MCF 10A (cell line): ENCODE measurements at regions of chr12 and their contacts with region 1.

Region 1: DNA sequence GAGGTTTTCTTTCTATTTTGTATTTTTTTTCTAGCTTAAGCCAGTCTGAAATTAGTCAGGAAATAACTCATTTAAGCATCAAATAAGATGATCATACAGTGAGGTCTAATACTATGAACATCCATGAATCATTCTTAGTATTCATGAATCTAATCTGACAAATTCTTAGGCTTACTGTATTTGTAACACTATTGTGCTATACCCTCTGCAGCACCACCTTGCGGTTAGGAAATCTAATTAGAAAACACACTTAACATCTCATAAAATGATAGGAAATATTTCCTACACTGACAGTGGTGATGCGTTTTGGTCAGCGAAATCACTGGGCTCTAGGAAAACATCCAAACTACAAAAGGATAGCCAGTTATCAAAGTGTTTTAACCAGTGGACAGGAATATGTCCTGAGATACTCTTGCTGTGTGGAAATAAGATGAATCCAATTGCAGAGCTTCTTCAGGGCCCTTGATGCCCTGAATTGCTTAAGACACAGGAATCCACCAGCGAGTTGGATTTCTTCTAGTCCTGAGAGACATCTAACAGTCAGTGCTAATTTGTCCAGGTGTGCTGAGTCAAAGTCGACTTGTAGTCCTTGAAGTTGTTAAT is 109.3 kb upstream of the MYF6 start:
- DNase-seq: peak; percentile 61
- H3K4me3 Mint-ChIP-seq: no peak overlapping the region
- H3K27ac Mint-ChIP-seq: no peak overlapping the region
- H3K4me1 Mint-ChIP-seq: no peaks in the 10 kb centered on the region
- H3K27me3 Mint-ChIP-seq: peaks cover 30% of the 10 kb centered on the region
- CTCF ChIP-seq: peak; percentile 52

Region 2: DNA sequence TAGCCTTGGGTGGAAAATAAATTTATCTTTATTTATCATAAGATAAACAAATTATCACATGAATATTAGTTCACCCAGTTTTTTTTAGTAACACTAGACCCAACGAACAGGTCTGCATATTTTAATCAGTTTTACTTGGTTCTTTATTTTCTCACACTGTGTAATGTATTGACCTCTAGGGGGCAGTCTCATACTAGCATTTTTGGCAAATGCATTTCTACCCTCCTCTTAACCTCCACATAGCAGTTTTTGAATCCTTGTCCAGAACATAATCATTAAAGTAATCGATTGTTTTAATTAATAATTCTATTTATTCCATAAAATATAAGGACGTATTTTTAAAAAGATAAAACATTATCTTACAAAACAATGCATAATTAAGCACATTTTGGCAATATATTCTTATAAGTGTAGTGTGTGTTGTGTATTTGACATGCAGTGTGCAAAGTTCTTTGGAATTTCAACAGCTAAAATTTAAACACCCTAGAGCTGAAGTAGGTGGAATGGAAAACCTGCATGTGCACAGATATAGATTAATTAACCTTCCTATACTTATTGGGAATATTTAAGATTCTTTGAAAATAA is 185.6 kb before region 1 on chr12:
- CTCF ChIA-PET with region 1: interaction called, 3 read pairs
- POLR2A ChIA-PET with region 1: no interaction called
- intact Hi-C with region 1: loop called (anchors 2 kb)
- DNase-seq: peak; percentile 66
- H3K4me3 Mint-ChIP-seq: no peak overlapping the region
- H3K27ac Mint-ChIP-seq: no peak overlapping the region
- H3K4me1 Mint-ChIP-seq: no peaks in the 10 kb centered on the region
- H3K27me3 Mint-ChIP-seq: peaks cover 67% of the 10 kb centered on the region
- CTCF ChIP-seq: peak; percentile 66

Region 3: DNA sequence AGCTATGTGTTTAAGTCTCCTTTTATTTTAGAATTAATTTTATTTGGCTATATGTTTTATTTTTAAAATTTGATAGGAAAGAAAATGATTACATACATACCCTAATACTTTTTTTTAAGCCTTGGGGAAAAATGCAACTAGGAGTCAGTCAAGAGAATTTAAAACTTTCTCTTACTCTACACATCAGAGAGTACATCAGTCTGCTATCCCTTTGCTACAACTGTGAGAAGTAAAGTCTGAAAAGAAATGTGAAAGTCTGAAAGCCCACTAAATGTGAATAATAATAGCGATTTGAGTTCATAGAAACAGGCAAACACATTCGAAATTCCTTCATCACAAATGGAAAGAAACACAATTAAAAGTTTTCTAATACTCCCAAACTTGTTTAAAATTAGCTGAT is 59.1 kb before region 1 on chr12:
- CTCF ChIA-PET with region 1: no interaction called
- POLR2A ChIA-PET with region 1: interaction called, 3 read pairs
- intact Hi-C with region 1: loop called (anchors 5 kb)
- DNase-seq: no peak
- H3K4me3 Mint-ChIP-seq: no peak overlapping the region
- H3K27ac Mint-ChIP-seq: no peak overlapping the region
- H3K4me1 Mint-ChIP-seq: no peaks in the 10 kb centered on the region
- H3K27me3 Mint-ChIP-seq: peaks cover 51% of the 10 kb centered on the region
- CTCF ChIP-seq: no peak

Region 4: GRCh38 chr12:80582431-80582830 is 15.7 kb before region 1 on chr12:
- CTCF ChIA-PET with region 1: interaction called, 21 read pairs
- POLR2A ChIA-PET with region 1: no interaction called
- intact Hi-C with region 1: no loop called
- DNase-seq: no peak
- H3K4me3 Mint-ChIP-seq: no peak overlapping the region
- H3K27ac Mint-ChIP-seq: no peak overlapping the region
- H3K4me1 Mint-ChIP-seq: no peaks in the 10 kb centered on the region
- H3K27me3 Mint-ChIP-seq: no peaks in the 10 kb centered on the region
- CTCF ChIP-seq: no peak

Region 5: DNA sequence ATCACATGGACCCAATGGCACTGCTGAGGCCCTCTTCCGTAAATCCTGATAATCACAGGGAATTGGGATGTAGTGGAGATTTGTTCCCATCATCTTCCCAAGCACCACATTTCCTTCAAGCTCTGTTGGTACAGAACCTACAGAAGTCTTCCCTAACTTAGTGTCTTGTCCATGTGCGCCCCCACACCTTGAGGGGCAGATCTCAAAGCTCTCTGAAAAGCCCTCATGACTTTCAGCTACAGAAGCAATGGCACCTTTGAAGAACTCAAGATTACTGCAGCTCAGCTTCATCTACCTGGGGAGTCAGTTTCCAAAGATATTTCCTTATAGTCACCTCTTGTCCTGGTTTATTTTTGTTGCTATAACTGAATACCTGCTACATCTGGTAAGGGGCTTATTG is 172.9 kb after region 1 on chr12:
- CTCF ChIA-PET with region 1: no interaction called
- POLR2A ChIA-PET with region 1: no interaction called
- intact Hi-C with region 1: no loop called
- DNase-seq: no peak
- H3K4me3 Mint-ChIP-seq: no peak overlapping the region
- H3K27ac Mint-ChIP-seq: no peak overlapping the region
- H3K4me1 Mint-ChIP-seq: no peaks in the 10 kb centered on the region
- H3K27me3 Mint-ChIP-seq: peaks cover 15% of the 10 kb centered on the region
- CTCF ChIP-seq: no peak

Region 6: GRCh38 chr12:81257947-81258551 is 659.9 kb after region 1 on chr12:
- CTCF ChIA-PET with region 1: no interaction called
- POLR2A ChIA-PET with region 1: no interaction called
- intact Hi-C with region 1: loop called (anchors 5 kb)
- DNase-seq: peak; percentile 55
- H3K4me3 Mint-ChIP-seq: no peak overlapping the region
- H3K27ac Mint-ChIP-seq: no peak overlapping the region
- H3K4me1 Mint-ChIP-seq: no peaks in the 10 kb centered on the region
- H3K27me3 Mint-ChIP-seq: peaks cover 76% of the 10 kb centered on the region
- CTCF ChIP-seq: peak; percentile 46